Transverse colon (tissue), 4 donors: ENCODE measurements at regions of chr5 and their contacts with region 1.

Region 1: GRCh38 chr5:78792345-78793145 is 144.0 kb upstream of the LHFPL2 start:
- DNase-seq: no peak
- H3K4me3 ChIP-seq: no peak overlapping the region
- H3K27ac ChIP-seq: no peak overlapping the region
- H3K4me1 ChIP-seq: peaks cover 0 to 7% (median 0%) of the 10 kb centered on the region in 4 donors
- H3K27me3 ChIP-seq: no peaks in the 10 kb centered on the region
- CTCF ChIP-seq: no peak
- EP300 ChIP-seq: no peak
- POLR2A ChIP-seq: no peak

Region 2: GRCh38 chr5:77912721-77913120 is 879.8 kb before region 1 on chr5:
- in situ Hi-C with region 1: no loop called
- intact Hi-C with region 1: loop called (anchors 5 kb)
- DNase-seq: no peak
- H3K4me3 ChIP-seq: no peak overlapping the region
- H3K27ac ChIP-seq: no peak overlapping the region
- H3K4me1 ChIP-seq: no peaks in the 10 kb centered on the region
- H3K27me3 ChIP-seq: peaks cover 18% of the 10 kb centered on the region
- CTCF ChIP-seq: no peak
- EP300 ChIP-seq: no peak
- POLR2A ChIP-seq: no peak

Region 3: GRCh38 chr5:78269088-78269703 is 523.3 kb before region 1 on chr5:
- in situ Hi-C with region 1: no loop called
- intact Hi-C with region 1: no loop called
- DNase-seq: no peak
- H3K4me3 ChIP-seq: no peak overlapping the region
- H3K27ac ChIP-seq: no peak overlapping the region
- H3K4me1 ChIP-seq: peaks cover 0 to 9% (median 0%) of the 10 kb centered on the region in 4 donors
- H3K27me3 ChIP-seq: no peaks in the 10 kb centered on the region
- CTCF ChIP-seq: peak; percentile 41 to 58 (median 47)
- EP300 ChIP-seq: no peak
- POLR2A ChIP-seq: no peak

Region 4: GRCh38 chr5:78829811-78830527 is 37.4 kb after region 1 on chr5:
- in situ Hi-C with region 1: no loop called
- intact Hi-C with region 1: no loop called
- DNase-seq: peak; percentile 13
- H3K4me3 ChIP-seq: no peak overlapping the region
- H3K27ac ChIP-seq: peak overlapping the region in 1 of 4 donors; percentile 20
- H3K4me1 ChIP-seq: peaks cover 0 to 10% (median 3%) of the 10 kb centered on the region in 4 donors
- H3K27me3 ChIP-seq: no peaks in the 10 kb centered on the region
- CTCF ChIP-seq: no peak
- EP300 ChIP-seq: no peak
- POLR2A ChIP-seq: no peak